ENCODE measurements at regions of chr5 and their contacts with region 1.

Region 1: GRCh38 chr5:116038817-116039216 is 6.5 kb downstream of the ARL14EPL start:
- DNase-seq: no peak
- H3K4me3 ChIP-seq: no peak overlapping the region
- H3K27ac ChIP-seq: no peak overlapping the region
- H3K4me1 ChIP-seq: no peaks in the 10 kb centered on the region
- H3K27me3 ChIP-seq: peaks cover 3% of the 10 kb centered on the region
- CTCF ChIP-seq: no peak

Region 2: DNA sequence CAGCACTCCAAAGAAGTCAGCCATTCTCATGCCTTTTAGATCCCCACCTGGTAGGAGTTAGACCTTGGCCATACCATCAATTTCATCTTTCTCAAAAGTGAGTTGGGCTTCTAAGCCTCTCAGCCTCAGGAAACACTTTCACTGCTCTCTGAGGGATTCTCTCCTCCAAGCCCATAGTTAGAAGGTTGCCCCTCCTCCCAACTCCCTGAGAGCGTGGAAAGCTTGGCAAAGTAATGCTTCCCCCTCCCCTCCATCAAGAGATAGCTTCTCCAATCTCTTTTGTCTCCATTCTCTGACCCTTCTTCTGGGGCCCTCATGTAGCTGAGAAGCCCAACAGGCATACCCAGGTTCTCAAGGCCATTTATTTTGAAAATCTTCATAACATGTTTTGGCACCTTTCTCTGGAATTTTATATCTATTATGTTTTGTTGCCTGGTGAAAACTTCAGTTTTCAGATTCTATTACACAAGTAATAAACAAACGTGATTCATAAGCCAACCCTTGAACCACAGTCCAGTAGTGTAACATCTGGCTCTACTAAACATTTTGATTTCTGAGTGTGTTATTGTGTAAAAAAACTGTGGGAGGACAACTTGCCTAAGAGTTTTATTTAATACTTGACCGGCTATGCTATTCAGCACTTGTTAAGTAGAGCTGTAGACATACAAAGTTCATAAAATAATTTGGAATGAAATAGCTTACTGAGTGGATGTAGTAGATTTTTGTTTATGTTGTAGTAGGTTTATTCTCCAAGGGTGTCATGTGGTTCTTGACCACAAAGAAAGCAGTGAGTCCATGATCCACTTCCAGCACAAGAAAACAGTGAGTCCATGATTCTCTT is 59.4 kb before region 1 on chr5:
- CTCF ChIA-PET with region 1: no interaction called
- dilution Hi-C with region 1: loop called (anchors 5 kb)
- in situ Hi-C with region 1: no loop called
- intact Hi-C with region 1: no loop called
- DNase-seq: no peak
- H3K4me3 ChIP-seq: no peak overlapping the region
- H3K27ac ChIP-seq: no peak overlapping the region
- H3K4me1 ChIP-seq: no peaks in the 10 kb centered on the region
- H3K27me3 ChIP-seq: peaks cover 2% of the 10 kb centered on the region
- CTCF ChIP-seq: no peak

Measured in mammary epithelial cell (primary cell).